ENCODE measurements at regions of chr13 and their contacts with region 1.

Region 1: DNA sequence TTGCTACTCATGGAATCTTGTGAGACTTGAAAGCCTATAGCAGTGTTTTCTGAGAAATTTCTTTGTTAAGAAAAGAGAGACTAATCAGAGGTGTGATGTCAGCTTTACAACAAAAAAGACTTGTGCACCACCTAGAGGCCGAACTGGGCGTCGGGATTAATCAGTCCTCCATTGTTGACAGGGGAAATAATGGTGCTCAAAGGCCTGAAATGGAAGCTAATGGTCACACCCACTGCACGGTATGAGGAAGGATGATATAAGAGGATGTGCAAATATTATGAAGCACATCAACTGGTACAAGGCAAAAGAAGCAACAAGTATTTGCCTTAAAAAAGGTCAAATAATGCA is 480.2 kb upstream of the MIR17HG start:
- DNase-seq: peak; percentile 84 to 85
- H3K4me3 ChIP-seq: no peak overlapping the region
- H3K4me3 Mint-ChIP-seq: no peak overlapping the region
- H3K27ac Mint-ChIP-seq: peak overlapping the region; percentile 72
- H3K4me1 ChIP-seq: peaks cover 10% of the 10 kb centered on the region
- H3K4me1 Mint-ChIP-seq: peaks cover 13% of the 10 kb centered on the region
- H3K27me3 ChIP-seq: no peaks in the 10 kb centered on the region
- H3K27me3 Mint-ChIP-seq: no peaks in the 10 kb centered on the region
- CTCF ChIP-seq: peak; percentile 68 to 74

Region 2: GRCh38 chr13:89432997-89433396 is 1434.3 kb before region 1 on chr13:
- CTCF ChIA-PET with region 1: no interaction called
- POLR2A ChIA-PET with region 1: no interaction called
- intact Hi-C with region 1: loop called (anchors 5 kb)
- DNase-seq: no peak
- H3K4me3 ChIP-seq: no peak overlapping the region
- H3K4me3 Mint-ChIP-seq: peak overlapping the region; percentile 54
- H3K27ac Mint-ChIP-seq: peak overlapping the region; percentile 76
- H3K4me1 ChIP-seq: peaks cover 3% of the 10 kb centered on the region; the same call in 1 of the 2 replicates
- H3K4me1 Mint-ChIP-seq: peaks cover 11% of the 10 kb centered on the region
- H3K27me3 ChIP-seq: no peaks in the 10 kb centered on the region
- H3K27me3 Mint-ChIP-seq: no peaks in the 10 kb centered on the region
- CTCF ChIP-seq: no peak

Region 3: DNA sequence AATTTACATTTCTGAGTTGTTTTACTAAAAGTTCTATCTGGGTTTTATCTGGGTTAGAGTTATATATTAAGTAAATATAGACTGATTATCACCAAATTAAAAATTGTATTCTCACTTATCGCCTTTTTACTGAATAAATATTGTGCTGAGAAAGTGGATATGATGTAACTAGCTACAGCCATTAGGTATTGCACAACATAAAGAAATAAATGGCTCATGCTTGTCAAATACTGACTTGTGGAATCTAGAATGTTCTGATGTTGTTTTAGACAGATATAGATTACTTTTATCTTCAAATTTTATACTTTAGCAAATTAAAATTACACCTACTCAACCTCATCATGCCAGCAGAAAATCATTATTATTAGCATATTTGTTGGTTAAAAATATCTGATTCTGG is 796.9 kb before region 1 on chr13:
- CTCF ChIA-PET with region 1: no interaction called
- POLR2A ChIA-PET with region 1: no interaction called
- intact Hi-C with region 1: loop called (anchors 5 kb)
- DNase-seq: no peak
- H3K4me3 ChIP-seq: no peak overlapping the region
- H3K4me3 Mint-ChIP-seq: peak overlapping the region; percentile 39
- H3K27ac Mint-ChIP-seq: peak overlapping the region; percentile 57
- H3K4me1 ChIP-seq: peaks cover 14% of the 10 kb centered on the region; the same call in 1 of the 2 replicates
- H3K4me1 Mint-ChIP-seq: peaks cover 10% of the 10 kb centered on the region
- H3K27me3 ChIP-seq: no peaks in the 10 kb centered on the region
- H3K27me3 Mint-ChIP-seq: no peaks in the 10 kb centered on the region
- CTCF ChIP-seq: no peak

Region 4: DNA sequence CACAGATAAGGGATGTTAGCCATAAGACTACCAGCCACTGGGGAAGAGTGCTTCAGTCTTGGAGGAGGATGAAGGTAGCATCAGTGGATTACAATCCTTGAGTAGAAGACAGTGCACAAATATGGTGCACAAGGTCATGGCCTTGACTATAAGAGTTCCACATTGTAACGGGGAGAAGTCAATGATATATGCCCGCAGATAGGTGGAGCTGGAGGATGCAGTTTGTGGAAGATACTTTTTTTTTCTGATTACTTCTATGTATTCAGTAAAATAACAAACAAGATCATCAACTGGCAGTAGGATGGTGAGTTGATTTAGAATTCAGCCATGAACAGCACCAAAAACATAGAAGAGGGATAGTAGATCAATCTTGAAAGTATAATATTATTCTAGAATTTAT is 446.6 kb before region 1 on chr13:
- CTCF ChIA-PET with region 1: no interaction called
- POLR2A ChIA-PET with region 1: no interaction called
- intact Hi-C with region 1: loop called (anchors 1 kb)
- DNase-seq: no peak
- H3K4me3 ChIP-seq: no peak overlapping the region
- H3K4me3 Mint-ChIP-seq: no peak overlapping the region
- H3K27ac Mint-ChIP-seq: no peak overlapping the region
- H3K4me1 ChIP-seq: peaks cover 13% of the 10 kb centered on the region
- H3K4me1 Mint-ChIP-seq: peaks cover 10% of the 10 kb centered on the region
- H3K27me3 ChIP-seq: no peaks in the 10 kb centered on the region
- H3K27me3 Mint-ChIP-seq: no peaks in the 10 kb centered on the region
- CTCF ChIP-seq: peak in 1 of 2 experiments; percentile 25

Region 5: GRCh38 chr13:90594694-90595093 is 272.6 kb before region 1 on chr13:
- CTCF ChIA-PET with region 1: no interaction called
- POLR2A ChIA-PET with region 1: no interaction called
- intact Hi-C with region 1: loop called (anchors 5 kb)
- DNase-seq: no peak
- H3K4me3 ChIP-seq: no peak overlapping the region
- H3K4me3 Mint-ChIP-seq: no peak overlapping the region
- H3K27ac Mint-ChIP-seq: no peak overlapping the region
- H3K4me1 ChIP-seq: peaks cover 16% of the 10 kb centered on the region
- H3K4me1 Mint-ChIP-seq: peaks cover 6% of the 10 kb centered on the region
- H3K27me3 ChIP-seq: no peaks in the 10 kb centered on the region
- H3K27me3 Mint-ChIP-seq: peaks cover 3% of the 10 kb centered on the region
- CTCF ChIP-seq: no peak

Region 6: DNA sequence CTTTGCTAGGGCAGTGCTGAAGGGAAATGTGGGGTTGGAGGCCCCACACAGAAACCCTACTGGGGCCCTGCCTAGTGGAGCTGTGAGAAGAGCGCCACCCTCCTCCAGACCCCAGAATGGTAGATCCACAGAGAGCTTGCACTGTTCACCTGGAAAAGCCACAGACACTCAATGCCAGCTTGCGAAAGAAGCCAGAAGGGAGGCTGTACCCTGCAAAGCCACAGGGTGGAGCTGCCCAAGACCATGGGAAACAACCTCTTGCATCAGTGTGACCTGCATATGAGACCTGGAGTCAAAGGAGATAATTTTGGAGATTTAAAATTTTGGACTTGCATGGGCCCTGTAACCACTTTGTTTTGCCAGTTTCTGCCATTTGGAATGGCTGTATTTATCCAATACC is 135.3 kb before region 1 on chr13:
- CTCF ChIA-PET with region 1: interaction called, 5 read pairs
- POLR2A ChIA-PET with region 1: no interaction called
- intact Hi-C with region 1: loop called (anchors 1 kb)
- DNase-seq: peak; percentile 37 to 39
- H3K4me3 ChIP-seq: no peak overlapping the region
- H3K4me3 Mint-ChIP-seq: no peak overlapping the region
- H3K27ac Mint-ChIP-seq: no peak overlapping the region
- H3K4me1 ChIP-seq: no peaks in the 10 kb centered on the region
- H3K4me1 Mint-ChIP-seq: no peaks in the 10 kb centered on the region
- H3K27me3 ChIP-seq: no peaks in the 10 kb centered on the region
- H3K27me3 Mint-ChIP-seq: no peaks in the 10 kb centered on the region
- CTCF ChIP-seq: peak in 1 of 2 experiments; percentile 12

Region 7: DNA sequence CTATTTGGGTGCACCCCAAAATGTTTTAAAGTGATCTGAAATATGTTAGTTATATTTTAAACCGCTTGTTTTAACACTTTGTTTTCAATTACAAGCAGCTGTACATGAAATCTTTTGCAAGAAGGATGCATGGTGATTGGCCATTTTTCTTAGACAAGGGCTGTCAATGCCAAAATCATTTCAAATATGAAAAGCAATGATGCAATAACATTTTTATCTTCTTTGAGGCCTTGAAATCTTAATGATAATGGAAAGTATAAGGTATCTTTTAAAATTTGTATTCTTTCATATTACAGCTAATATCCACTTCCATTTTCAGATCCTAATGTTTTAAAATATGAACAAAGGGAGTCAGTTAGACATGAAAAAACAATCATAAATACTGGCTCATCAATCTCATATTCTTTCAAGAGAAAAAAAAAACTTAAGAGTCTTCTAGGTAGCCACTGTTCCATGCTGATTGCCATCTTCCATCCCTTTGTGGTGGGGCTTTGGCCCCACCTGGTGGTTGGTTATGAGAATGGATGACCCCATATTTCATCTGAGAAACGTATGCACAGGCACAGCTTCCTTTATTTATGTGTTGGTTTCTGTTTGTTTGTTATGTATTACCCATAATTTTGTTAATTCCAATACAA is 149.8 kb after region 1 on chr13:
- CTCF ChIA-PET with region 1: interaction called, 3 read pairs
- POLR2A ChIA-PET with region 1: no interaction called
- intact Hi-C with region 1: loop called (anchors 1 kb)
- DNase-seq: peak; percentile 52 to 71
- H3K4me3 ChIP-seq: no peak overlapping the region
- H3K4me3 Mint-ChIP-seq: no peak overlapping the region
- H3K27ac Mint-ChIP-seq: no peak overlapping the region
- H3K4me1 ChIP-seq: no peaks in the 10 kb centered on the region
- H3K4me1 Mint-ChIP-seq: no peaks in the 10 kb centered on the region
- H3K27me3 ChIP-seq: no peaks in the 10 kb centered on the region
- H3K27me3 Mint-ChIP-seq: peaks cover 7% of the 10 kb centered on the region
- CTCF ChIP-seq: peak; percentile 82 to 87